Gastrocnemius medialis (tissue), 4 donors: ENCODE measurements at regions of chr17 and their contacts with region 1.

Region 1: DNA sequence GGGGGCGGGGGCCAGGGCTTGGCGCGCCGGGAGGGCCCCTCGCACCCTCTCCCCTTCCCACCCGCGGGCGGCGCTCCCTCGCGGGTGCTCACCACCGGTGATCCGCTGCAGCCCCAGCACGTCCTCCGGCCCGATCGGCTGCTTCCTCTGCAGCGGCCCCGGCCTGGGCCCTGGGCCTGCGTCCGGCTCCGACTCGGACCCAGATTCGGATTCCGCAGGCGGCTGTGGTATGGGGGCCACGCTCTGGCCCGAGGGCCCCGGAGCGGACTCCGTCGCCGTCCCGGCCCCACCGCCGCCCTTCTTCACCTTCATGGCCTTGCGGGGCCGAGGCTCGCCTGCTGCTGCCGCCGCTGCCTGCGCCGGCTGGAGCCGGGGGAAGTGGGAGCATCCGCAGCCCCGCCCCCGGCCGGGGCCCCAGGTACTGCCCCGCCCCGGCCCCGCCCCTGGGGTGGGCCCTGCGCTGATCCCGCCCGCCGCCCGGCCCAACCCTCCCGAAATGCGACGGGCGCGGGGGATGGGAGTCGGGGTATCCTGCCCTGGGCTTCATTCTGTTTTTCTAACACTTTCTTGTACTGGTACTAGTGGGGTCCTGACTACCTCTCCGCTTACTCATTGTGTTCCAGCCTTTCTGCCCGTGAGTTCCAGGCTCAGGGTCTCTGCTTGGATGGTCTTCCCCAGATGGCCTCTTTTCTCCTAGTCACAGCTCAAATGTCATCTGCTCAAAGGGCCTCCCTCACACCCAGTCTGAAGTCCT is at the start of gene UNC119:
- DNase-seq: peak; percentile 33 to 37
- ATAC-seq: peak; percentile 78
- H3K4me3 ChIP-seq: peak within 1 kb of the TSS; percentile 60 to 88 (median 77)
- H3K27ac ChIP-seq: peak within 1 kb of the TSS; percentile 8 to 47 (median 24)
- H3K4me1 ChIP-seq: peaks cover 10 to 15% of the 10 kb centered on the region in 2 donors
- H3K27me3 ChIP-seq: no peaks in the 10 kb centered on the region
- CTCF ChIP-seq: no peak
- POLR2A ChIP-seq: peak; percentile 17 to 24
- total RNA-seq, gene UNC119: 3.1 to 10.2 (median 6.3) TPM

Region 2: DNA sequence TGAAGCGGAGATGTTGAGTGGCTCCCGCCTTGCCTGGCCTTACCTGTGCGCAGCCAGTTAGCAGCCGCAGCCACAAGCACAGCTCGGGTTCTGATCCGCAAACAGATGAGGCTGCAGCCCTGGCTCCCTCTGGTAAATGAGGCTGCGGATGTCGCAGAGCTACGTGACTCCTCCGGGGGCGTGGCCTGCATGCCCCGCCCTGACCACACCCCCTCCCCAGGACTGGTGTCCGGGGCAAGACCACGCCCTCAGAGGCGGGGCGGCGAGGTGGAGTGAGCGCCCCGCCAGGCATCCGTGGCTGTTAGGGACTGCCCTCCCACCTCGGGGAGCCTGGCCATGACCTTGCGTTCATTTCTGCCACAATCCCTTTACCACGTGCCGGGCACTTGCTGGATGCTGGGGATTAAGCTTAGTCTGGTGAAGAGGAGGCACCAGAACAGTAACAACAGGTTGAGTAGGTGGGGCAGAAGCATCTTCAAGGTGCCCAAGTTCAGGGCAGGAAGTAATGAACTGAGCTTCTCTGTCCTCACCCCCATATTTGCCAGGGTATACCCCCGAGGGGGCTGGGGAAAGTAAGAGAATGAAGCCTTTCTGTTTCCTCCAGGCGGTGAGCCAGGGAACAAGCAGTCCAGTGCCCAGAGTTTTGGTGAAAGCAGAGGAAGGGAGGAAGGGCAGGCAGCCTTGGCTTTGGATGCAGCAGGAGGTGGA is 24.5 kb after region 1 on chr17 and contains the start of gene ALDOC:
- in situ Hi-C with region 1: no loop called
- intact Hi-C with region 1: loop called (anchors 2 kb)
- DNase-seq: peak; percentile 87 to 95
- ATAC-seq: peak; percentile 85 to 92
- H3K4me3 ChIP-seq: peak within 1 kb of the TSS; percentile 32 to 45 (median 35)
- H3K27ac ChIP-seq: peak within 1 kb of the TSS in 1 of 4 donors; percentile 9
- H3K4me1 ChIP-seq: peaks cover 6 to 15% of the 10 kb centered on the region in 2 donors
- H3K27me3 ChIP-seq: no peaks in the 10 kb centered on the region
- CTCF ChIP-seq: no peak
- POLR2A ChIP-seq: peak; percentile 67 to 82
- total RNA-seq, gene ALDOC: 0.87 to 7.0 (median 3.3) TPM

Region 3: GRCh38 chr17:28598799-28599310 is 46.4 kb after region 1 on chr17 and contains the start of gene SPAG5:
- in situ Hi-C with region 1: no loop called
- intact Hi-C with region 1: loop called (anchors 2 kb)
- DNase-seq: peak; percentile 84 to 88
- ATAC-seq: peak; percentile 94
- H3K4me3 ChIP-seq: peak within 1 kb of the TSS; percentile 51 to 69 (median 66)
- H3K27ac ChIP-seq: peak within 1 kb of the TSS; percentile 81 to 86 (median 85)
- H3K4me1 ChIP-seq: peaks cover 5% of the 10 kb centered on the region in 2 donors
- H3K27me3 ChIP-seq: no peaks in the 10 kb centered on the region
- CTCF ChIP-seq: no peak
- POLR2A ChIP-seq: peak; percentile 77 to 85
- total RNA-seq, gene SPAG5: 0.41 to 1.5 (median 0.96) TPM

Region 4: GRCh38 chr17:29116804-29117772 is 564.7 kb after region 1 on chr17:
- in situ Hi-C with region 1: no loop called
- intact Hi-C with region 1: no loop called
- DNase-seq: peak; percentile 49 to 83
- ATAC-seq: peak; percentile 21 to 31
- H3K4me3 ChIP-seq: no peak overlapping the region
- H3K27ac ChIP-seq: peak overlapping the region in 3 of 4 donors; percentile 51 to 98 (median 89)
- H3K4me1 ChIP-seq: peaks cover 43 to 46% of the 10 kb centered on the region in 2 donors
- H3K27me3 ChIP-seq: no peaks in the 10 kb centered on the region
- CTCF ChIP-seq: peak; percentile 78 to 94 (median 91)
- POLR2A ChIP-seq: no peak